ENCODE measurements at regions of chr10 and their contacts with region 1.

Region 1: DNA sequence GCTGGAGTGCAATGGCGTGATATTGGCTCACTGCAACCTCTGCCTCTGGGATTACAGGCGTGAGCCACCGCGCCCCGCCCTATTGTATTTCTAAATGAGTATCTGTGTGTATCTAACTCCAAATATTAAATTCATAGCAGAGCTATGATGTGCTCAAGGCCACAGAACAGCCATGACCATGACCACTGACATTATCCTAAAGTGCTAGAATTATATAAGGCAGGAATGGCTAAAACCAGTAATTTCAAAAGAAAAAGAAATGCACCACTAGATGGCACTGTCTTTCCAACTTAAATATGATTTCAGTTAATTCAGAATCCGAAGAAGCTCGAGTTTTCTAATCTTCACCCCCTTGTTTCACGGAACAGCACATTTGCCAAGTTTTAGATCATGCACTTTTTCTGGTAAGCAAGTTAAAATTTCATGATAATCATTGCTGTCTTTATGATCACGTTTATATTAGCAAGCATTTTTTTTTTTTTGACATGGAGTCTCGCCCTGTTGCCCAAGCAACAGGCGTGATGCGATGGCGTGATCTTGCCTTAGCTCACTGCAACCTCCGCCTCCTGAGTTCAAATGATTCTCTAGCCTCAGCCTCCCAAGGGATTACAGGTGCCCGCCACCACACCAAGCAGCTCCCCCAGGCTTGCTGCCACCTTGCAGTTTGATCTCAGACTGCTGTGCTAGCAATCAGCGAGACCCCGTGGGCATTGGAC is 65.3 kb downstream of the OR13A1 start:
- DNase-seq: peak in 4 of 5 donors; percentile 55 to 65 (median 58)
- H3K4me3 ChIP-seq: no peak overlapping the region
- H3K4me3 Mint-ChIP-seq: peak overlapping the region in 4 of 8 donors; percentile 6 to 58 (median 36)
- H3K27ac ChIP-seq: no peak overlapping the region
- H3K27ac Mint-ChIP-seq: peak overlapping the region in 1 of 7 donors; percentile 6
- H3K4me1 ChIP-seq: no peaks in the 10 kb centered on the region
- H3K4me1 Mint-ChIP-seq: peaks cover 4 to 9% (median 7%) of the 10 kb centered on the region in 4 donors
- H3K27me3 ChIP-seq: no peaks in the 10 kb centered on the region
- H3K27me3 Mint-ChIP-seq: peaks cover 2% of the 10 kb centered on the region in 2 donors

Region 2: GRCh38 chr10:45008524-45009161 is 241.5 kb before region 1 on chr10:
- CTCF ChIA-PET with region 1: no interaction called
- POLR2A ChIA-PET with region 1: no interaction called
- intact Hi-C with region 1: no loop called
- DNase-seq: peak; percentile 43 to 66 (median 60)
- H3K4me3 ChIP-seq: no peak overlapping the region
- H3K4me3 Mint-ChIP-seq: no peak overlapping the region
- H3K27ac ChIP-seq: no peak overlapping the region
- H3K27ac Mint-ChIP-seq: no peak overlapping the region
- H3K4me1 ChIP-seq: no peaks in the 10 kb centered on the region
- H3K4me1 Mint-ChIP-seq: peaks cover 2 to 6% (median 5%) of the 10 kb centered on the region in 4 donors
- H3K27me3 ChIP-seq: no peaks in the 10 kb centered on the region
- H3K27me3 Mint-ChIP-seq: peaks cover 0 to 3% of the 10 kb centered on the region in 2 donors

Region 3: DNA sequence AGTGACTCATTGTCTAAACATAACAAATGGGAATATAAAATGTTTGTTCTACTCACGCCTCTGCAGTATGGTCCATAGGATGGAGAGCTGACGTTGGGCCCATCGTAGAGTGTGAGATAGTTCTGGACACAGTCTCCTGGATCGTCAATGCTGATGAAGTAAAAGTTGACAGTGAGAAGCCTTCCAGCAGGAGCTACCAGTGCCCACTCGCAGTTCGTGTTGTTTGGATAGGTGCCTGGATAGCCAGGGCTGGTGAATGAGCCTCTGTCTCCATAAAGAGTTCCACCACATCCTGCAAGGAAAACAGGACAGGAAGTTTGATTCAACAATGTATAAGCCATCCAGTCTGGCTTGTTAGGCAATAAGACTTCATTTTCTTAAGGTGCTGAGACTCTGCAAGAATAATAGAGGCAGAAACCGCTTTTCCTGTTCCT is 14.3 kb before region 1 on chr10:
- CTCF ChIA-PET with region 1: interaction called, 20 read pairs
- POLR2A ChIA-PET with region 1: no interaction called
- intact Hi-C with region 1: no loop called
- DNase-seq: no peak
- H3K4me3 ChIP-seq: no peak overlapping the region
- H3K4me3 Mint-ChIP-seq: no peak overlapping the region
- H3K27ac ChIP-seq: no peak overlapping the region
- H3K27ac Mint-ChIP-seq: no peak overlapping the region
- H3K4me1 ChIP-seq: no peaks in the 10 kb centered on the region
- H3K4me1 Mint-ChIP-seq: no peaks in the 10 kb centered on the region
- H3K27me3 ChIP-seq: no peaks in the 10 kb centered on the region
- H3K27me3 Mint-ChIP-seq: peaks cover 9 to 13% of the 10 kb centered on the region in 2 donors

Region 4: GRCh38 chr10:45261946-45262345 is 11.8 kb after region 1 on chr10:
- CTCF ChIA-PET with region 1: interaction called, 18 read pairs
- POLR2A ChIA-PET with region 1: no interaction called
- intact Hi-C with region 1: no loop called
- DNase-seq: no peak
- H3K4me3 ChIP-seq: no peak overlapping the region
- H3K4me3 Mint-ChIP-seq: no peak overlapping the region
- H3K27ac ChIP-seq: no peak overlapping the region
- H3K27ac Mint-ChIP-seq: no peak overlapping the region
- H3K4me1 ChIP-seq: no peaks in the 10 kb centered on the region
- H3K4me1 Mint-ChIP-seq: no peaks in the 10 kb centered on the region
- H3K27me3 ChIP-seq: no peaks in the 10 kb centered on the region
- H3K27me3 Mint-ChIP-seq: peaks cover 5 to 13% of the 10 kb centered on the region in 2 donors

Region 5: DNA sequence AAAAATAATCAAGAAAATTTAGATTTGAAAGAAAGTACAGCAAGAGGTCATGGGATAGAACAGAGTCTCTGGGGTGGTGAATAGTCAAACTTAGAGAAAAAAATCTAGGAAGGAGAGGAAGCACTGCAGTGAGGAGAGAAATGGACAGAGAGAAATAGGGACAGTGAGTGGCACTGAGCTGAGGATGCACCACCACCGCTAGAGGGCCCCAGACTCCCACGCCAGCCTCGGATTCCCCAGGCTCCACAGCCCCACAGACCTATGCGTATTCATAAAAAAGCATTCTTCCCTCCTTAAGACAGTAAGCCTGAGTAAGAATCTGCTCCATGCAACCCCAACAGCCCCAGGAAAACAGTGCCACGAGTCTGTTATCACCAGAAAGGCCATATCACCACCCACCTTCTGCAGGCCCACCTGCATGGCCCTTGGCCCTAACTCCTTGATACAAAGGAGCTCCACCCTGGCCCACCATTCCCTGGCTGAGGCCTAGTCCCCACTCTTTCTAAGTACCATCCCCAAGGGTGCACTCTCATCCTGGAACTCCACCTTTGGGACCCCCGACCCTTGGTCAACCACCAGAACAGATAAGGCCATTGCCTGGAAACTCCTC is 214.9 kb after region 1 on chr10:
- CTCF ChIA-PET with region 1: interaction called, 11 read pairs
- POLR2A ChIA-PET with region 1: no interaction called
- intact Hi-C with region 1: loop called (anchors 10 kb)
- DNase-seq: peak; percentile 67 to 73 (median 70)
- H3K4me3 ChIP-seq: no peak overlapping the region
- H3K4me3 Mint-ChIP-seq: no peak overlapping the region
- H3K27ac ChIP-seq: no peak overlapping the region
- H3K27ac Mint-ChIP-seq: peak overlapping the region in 6 of 7 donors; percentile 5 to 83 (median 45)
- H3K4me1 ChIP-seq: peaks cover 8% of the 10 kb centered on the region
- H3K4me1 Mint-ChIP-seq: peaks cover 14 to 39% (median 21%) of the 10 kb centered on the region in 4 donors
- H3K27me3 ChIP-seq: no peaks in the 10 kb centered on the region
- H3K27me3 Mint-ChIP-seq: no peaks in the 10 kb centered on the region

Measured in CD4-positive, alpha-beta memory T cell (primary cell).